ENCODE measurements at regions of chr15 and their contacts with region 1.

Region 1: DNA sequence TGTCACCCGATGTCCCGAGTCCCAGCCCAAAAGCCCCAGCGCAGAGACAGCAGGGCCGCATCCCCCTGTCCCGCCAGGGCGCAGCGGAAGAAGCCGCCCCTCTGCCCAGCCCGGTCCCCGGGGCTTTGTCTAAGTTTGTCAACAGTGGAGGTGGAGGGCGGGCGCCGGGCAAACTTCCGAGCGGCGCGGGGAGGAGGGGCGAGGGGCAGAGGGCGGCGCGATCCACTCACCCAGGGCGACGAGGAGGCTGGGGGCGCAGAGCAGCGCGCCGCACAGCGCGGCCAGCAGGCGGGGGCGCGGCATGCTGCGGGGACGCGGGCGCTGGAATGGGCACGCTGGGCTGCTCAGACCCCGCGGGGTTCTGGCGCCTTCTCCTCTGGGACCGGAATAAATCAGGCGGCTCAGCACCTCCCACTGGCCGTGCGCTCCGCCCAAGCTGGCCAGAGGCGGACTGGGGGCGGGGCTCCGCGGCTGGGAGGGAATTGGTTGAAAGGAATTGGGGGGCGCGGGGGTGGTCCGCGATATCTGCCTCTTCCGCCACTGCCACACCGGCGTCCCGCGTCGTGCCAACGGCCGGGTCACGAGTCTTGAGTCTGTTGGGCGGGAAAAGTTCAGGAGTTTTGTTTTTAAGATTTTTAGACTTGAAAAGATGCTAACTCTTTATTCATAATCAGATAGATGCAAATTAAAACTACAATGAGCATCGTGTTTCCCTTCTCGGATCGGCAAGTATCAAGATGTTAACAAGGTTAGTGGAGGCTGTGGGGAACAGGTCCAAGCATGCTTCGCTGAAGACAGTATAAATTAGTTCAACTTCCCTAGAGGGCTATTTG is at the start of gene MFGE8:
- DNase-seq: peak; percentile 59 to 77 (median 73)
- ATAC-seq: peak; percentile 93
- H3K4me3 ChIP-seq: peak within 1 kb of the TSS; percentile 82
- H3K4me3 Mint-ChIP-seq: peak within 1 kb of the TSS; percentile 87 to 99 (median 96)
- H3K27ac ChIP-seq: peak within 1 kb of the TSS; percentile 73
- H3K27ac Mint-ChIP-seq: peak within 1 kb of the TSS; percentile 71 to 96 (median 92)
- H3K4me1 ChIP-seq: peaks cover 0 to 15% of the 10 kb centered on the region in 2 donors
- H3K4me1 Mint-ChIP-seq: peaks cover 8 to 38% (median 33%) of the 10 kb centered on the region in 7 donors
- H3K27me3 ChIP-seq: no peaks in the 10 kb centered on the region
- H3K27me3 Mint-ChIP-seq: peaks cover 0 to 8% (median 0%) of the 10 kb centered on the region in 5 donors
- total RNA-seq, gene MFGE8: 26.3 to 106 (median 90.3) TPM

Region 2: DNA sequence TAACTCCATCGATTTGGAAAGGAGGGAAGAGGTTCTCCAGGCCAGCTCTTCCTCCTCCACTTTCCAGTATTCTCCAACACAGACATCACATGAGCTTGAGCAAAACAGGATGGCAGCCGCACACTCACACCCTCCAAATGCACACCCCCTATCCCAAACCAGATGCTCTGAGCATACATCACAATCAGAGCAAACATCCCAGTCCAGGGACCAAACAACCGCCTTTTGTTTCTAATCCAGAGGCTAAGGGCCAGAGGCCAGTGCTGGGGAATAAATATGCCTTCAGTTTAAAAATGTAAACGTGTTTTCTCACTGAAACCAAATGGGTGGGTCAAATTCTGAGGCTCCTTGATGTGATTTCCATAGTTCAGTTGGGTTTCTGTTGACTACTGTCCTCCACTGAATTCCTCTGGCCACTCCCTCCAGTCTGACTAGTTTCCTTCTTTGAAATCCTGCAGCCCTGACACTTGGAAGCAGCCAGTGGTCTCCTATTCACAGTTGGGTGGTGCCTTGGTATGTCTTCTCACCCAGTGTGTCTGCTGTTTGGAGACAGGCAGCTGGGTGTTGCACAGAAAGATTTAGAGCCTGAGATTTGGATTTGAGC is 19.1 kb after region 1 on chr15:
- CTCF ChIA-PET with region 1: no interaction called
- POLR2A ChIA-PET with region 1: no interaction called
- intact Hi-C with region 1: no loop called
- DNase-seq: no peak
- ATAC-seq: no peak
- H3K4me3 ChIP-seq: no peak overlapping the region
- H3K4me3 Mint-ChIP-seq: no peak overlapping the region
- H3K27ac ChIP-seq: no peak overlapping the region
- H3K27ac Mint-ChIP-seq: no peak overlapping the region
- H3K4me1 ChIP-seq: no peaks in the 10 kb centered on the region
- H3K4me1 Mint-ChIP-seq: no peaks in the 10 kb centered on the region
- H3K27me3 ChIP-seq: no peaks in the 10 kb centered on the region
- H3K27me3 Mint-ChIP-seq: peaks cover 5 to 23% (median 12%) of the 10 kb centered on the region in 5 donors

Region 3: DNA sequence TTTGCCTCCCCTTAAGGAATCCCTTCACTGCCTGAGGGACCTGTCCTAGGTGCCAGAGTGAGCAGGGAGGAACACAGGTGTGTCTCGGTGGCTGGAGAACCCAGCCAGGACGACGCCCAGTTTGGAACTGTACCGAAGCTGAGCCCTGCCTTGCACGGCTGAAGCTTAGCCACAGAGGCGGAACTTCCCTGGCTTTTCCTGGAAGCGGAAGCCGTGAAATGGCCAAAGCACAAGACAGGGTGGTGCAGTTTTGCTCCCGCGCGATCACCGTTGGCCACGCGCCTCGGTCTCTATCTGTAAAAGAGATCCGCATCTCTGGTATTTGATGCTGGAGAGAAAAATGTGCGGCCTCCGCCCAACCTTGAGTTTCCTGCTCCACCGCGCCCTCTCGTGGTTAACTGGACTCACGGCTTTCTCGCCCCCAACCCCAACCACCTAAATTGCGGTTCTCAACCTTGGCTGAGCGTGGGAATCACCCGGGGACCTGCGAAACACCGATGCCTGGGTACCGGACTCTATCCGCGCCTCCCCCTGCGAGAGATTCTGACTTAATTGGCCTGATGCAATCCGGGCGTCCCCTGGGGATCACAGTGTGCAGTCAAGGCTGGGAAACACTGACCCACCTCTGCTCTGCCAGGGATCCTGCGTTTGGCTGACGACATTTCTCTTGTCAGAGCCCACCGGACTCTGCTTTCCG is 104.3 kb after region 1 on chr15:
- CTCF ChIA-PET with region 1: interaction called, 4 read pairs
- POLR2A ChIA-PET with region 1: no interaction called
- intact Hi-C with region 1: loop called in 1 of 2 experiments (anchors 2 kb)
- DNase-seq: peak; percentile 73 to 88 (median 82)
- ATAC-seq: peak; percentile 96
- H3K4me3 ChIP-seq: peak overlapping the region; percentile 31
- H3K4me3 Mint-ChIP-seq: peak overlapping the region; percentile 56 to 83 (median 70)
- H3K27ac ChIP-seq: no peak overlapping the region
- H3K27ac Mint-ChIP-seq: peak overlapping the region; percentile 26 to 91 (median 78)
- H3K4me1 ChIP-seq: peaks cover 10 to 13% of the 10 kb centered on the region in 2 donors
- H3K4me1 Mint-ChIP-seq: peaks cover under 1 to 28% (median 13%) of the 10 kb centered on the region in 7 donors
- H3K27me3 ChIP-seq: no peaks in the 10 kb centered on the region
- H3K27me3 Mint-ChIP-seq: peaks cover 0 to 45% (median 0%) of the 10 kb centered on the region in 5 donors

Region 4: GRCh38 chr15:89157918-89158564 is 244.8 kb after region 1 on chr15:
- CTCF ChIA-PET with region 1: no interaction called
- POLR2A ChIA-PET with region 1: no interaction called
- intact Hi-C with region 1: no loop called
- DNase-seq: no peak
- ATAC-seq: no peak
- H3K4me3 ChIP-seq: no peak overlapping the region
- H3K4me3 Mint-ChIP-seq: no peak overlapping the region
- H3K27ac ChIP-seq: no peak overlapping the region
- H3K27ac Mint-ChIP-seq: peak overlapping the region in 3 of 9 donors; percentile 29 to 49 (median 29)
- H3K4me1 ChIP-seq: no peaks in the 10 kb centered on the region
- H3K4me1 Mint-ChIP-seq: peaks cover 0 to 6% (median 0%) of the 10 kb centered on the region in 7 donors
- H3K27me3 ChIP-seq: no peaks in the 10 kb centered on the region
- H3K27me3 Mint-ChIP-seq: no peaks in the 10 kb centered on the region

Measured in naive thymus-derived CD4-positive, alpha-beta T cell (primary cell).